OCI-LY7 (cell line): ENCODE measurements at regions of chr20 and their contacts with region 1.

Region 1: GRCh38 chr20:20568604-20569205 is 143.7 kb downstream of the RALGAPA2 start:
- DNase-seq: peak; percentile 58
- H3K4me3 ChIP-seq: no peak overlapping the region
- H3K27ac ChIP-seq: no peak overlapping the region
- H3K4me1 ChIP-seq: peaks cover 8% of the 10 kb centered on the region
- CTCF ChIP-seq: peak; percentile 88

Region 2: GRCh38 chr20:20360464-20360863 is 208.2 kb before region 1 on chr20:
- CTCF ChIA-PET with region 1: no interaction called
- POLR2A ChIA-PET with region 1: no interaction called
- intact Hi-C with region 1: loop called (anchors 1 kb)
- DNase-seq: peak; percentile 39
- H3K4me3 ChIP-seq: no peak overlapping the region
- H3K27ac ChIP-seq: no peak overlapping the region
- H3K4me1 ChIP-seq: no peaks in the 10 kb centered on the region
- CTCF ChIP-seq: peak; percentile 86

Region 3: GRCh38 chr20:20582734-20583133 is 14.0 kb after region 1 on chr20:
- CTCF ChIA-PET with region 1: no interaction called
- POLR2A ChIA-PET with region 1: no interaction called
- intact Hi-C with region 1: no loop called
- DNase-seq: no peak
- H3K4me3 ChIP-seq: no peak overlapping the region
- H3K27ac ChIP-seq: no peak overlapping the region
- H3K4me1 ChIP-seq: no peaks in the 10 kb centered on the region
- CTCF ChIP-seq: no peak

Region 4: DNA sequence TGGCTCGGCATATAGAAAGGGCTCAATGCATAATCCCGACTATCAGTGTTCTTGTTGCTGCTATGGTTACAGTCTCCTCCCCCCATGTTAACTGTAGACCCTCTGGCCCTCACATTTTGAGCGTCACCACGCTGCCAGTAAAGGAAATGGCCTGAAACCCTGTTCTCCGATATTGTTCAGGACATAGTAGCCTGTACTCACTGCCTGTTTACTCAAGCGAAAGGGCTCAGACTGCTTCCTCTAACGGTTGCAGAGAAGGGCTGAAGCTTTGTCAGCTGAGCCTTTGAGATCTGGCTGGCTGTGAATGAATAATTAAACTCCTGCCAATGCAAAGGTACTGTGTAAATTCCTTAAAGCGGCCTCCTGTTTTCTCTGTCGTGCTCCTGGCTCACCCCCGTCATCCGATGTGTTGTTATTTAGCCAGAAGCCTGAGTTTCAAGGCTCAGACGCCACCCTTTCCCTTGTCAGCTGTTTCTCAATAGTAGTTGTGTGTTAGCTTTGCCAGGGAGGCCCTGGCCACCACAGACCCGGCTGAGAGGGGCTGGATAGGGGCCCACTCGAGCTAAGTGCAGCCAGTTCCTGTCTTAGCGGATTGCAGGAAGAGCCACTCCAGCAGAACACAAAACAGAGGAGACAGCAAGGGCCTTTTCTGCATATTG is 174.9 kb after region 1 on chr20:
- CTCF ChIA-PET with region 1: no interaction called
- POLR2A ChIA-PET with region 1: no interaction called
- intact Hi-C with region 1: no loop called
- DNase-seq: no peak
- H3K4me3 ChIP-seq: no peak overlapping the region
- H3K27ac ChIP-seq: no peak overlapping the region
- H3K4me1 ChIP-seq: no peaks in the 10 kb centered on the region
- CTCF ChIP-seq: no peak